ENCODE measurements at regions of chr20 and their contacts with region 1.

Region 1: DNA sequence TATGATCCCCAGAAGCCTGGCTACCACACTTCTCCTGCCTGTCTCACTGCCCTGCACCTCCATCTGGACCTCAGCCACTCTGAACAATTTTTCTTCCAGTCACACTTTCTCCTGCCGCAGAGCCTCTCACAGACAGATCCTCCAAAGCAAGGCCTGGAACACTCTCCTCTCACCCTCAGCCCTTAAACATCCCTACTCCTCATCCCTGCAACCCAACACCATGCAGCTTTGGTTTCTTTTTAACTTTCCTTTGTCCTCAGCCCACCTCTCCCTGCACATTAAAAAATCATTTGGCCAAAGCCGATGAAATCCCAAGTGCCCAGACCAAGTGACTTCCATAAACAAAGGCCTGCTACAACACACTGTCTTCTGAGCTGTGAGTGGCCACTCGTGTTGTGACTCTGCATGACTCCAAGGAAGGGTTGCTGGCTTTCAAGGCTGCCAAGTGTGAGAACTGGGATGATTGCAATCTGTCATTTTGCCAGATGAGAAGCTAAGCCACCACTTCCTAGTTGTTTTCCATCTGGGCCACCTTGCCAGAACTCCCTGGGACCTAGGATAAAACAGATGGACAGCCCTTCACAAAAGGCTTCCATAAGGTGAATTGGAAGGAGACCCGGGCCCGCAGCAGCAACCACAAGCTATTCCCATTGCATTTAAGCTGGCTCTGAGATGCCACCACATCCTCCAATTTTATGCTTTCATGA is 144.4 kb upstream of the SSTR4 start:
- DNase-seq: no peak
- H3K4me3 ChIP-seq: no peak overlapping the region
- H3K27ac ChIP-seq: no peak overlapping the region
- H3K4me1 ChIP-seq: no peaks in the 10 kb centered on the region
- H3K27me3 ChIP-seq: no peaks in the 10 kb centered on the region
- CTCF ChIP-seq: no peak

Region 2: GRCh38 chr20:22861229-22861980 is 29.3 kb before region 1 on chr20:
- CTCF ChIA-PET with region 1: no interaction called
- POLR2A ChIA-PET with region 1: interaction called, 30 read pairs
- intact Hi-C with region 1: no loop called
- DNase-seq: no peak
- H3K4me3 ChIP-seq: no peak overlapping the region
- H3K27ac ChIP-seq: no peak overlapping the region
- H3K4me1 ChIP-seq: no peaks in the 10 kb centered on the region
- H3K27me3 ChIP-seq: no peaks in the 10 kb centered on the region
- CTCF ChIP-seq: no peak